ENCODE measurements at regions of chr2 and their contacts with region 1.

Region 1: DNA sequence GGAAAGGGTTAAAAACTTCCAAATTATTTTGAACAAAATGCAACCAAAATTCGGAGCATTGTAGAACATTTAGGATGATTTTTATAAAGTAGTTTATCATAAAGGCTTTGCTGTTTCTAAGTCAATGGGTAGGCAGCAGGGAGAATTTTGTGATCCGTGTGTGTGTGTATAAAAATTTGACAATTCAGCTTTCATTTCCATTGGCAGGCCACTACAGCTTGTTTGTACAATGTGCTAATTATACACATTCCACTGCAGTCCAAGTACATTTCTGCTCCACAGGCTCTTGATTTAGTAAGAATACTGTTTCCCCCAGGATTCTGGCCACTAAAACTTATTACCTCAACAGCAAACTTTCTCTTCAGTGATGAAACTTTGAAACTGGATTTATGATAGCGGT is 71.8 kb upstream of the LTBP1 start:
- DNase-seq: no peak
- H3K4me3 ChIP-seq: peak overlapping the region in 58 of 59 donors; percentile 6 to 67 (median 42)
- H3K27ac ChIP-seq: peak overlapping the region in 33 of 59 donors; percentile 1 to 83 (median 45)
- H3K27me3 ChIP-seq: no peaks in the 10 kb centered on the region
- CTCF ChIP-seq: peak in 5 of 56 donors; percentile 6 to 21 (median 13)

Region 2: GRCh38 chr2:32825291-32825712 is 49.6 kb before region 1 on chr2:
- intact Hi-C with region 1: loop called in 1 of 2 experiments (anchors 5 kb)
- DNase-seq: peak in 4 of 10 donors; percentile 28 to 65 (median 50)
- H3K4me3 ChIP-seq: peak overlapping the region in 49 of 59 donors; percentile 9 to 65 (median 34)
- H3K27ac ChIP-seq: peak overlapping the region in 57 of 59 donors; percentile 3 to 92 (median 79)
- H3K27me3 ChIP-seq: no peaks in the 10 kb centered on the region
- CTCF ChIP-seq: peak in 1 of 56 donors; percentile 15

Region 3: GRCh38 chr2:32926708-32927084 is 51.8 kb after region 1 on chr2:
- intact Hi-C with region 1: loop called in 1 of 2 experiments (anchors 5 kb)
- DNase-seq: peak in 4 of 10 donors; percentile 38 to 60 (median 56)
- H3K4me3 ChIP-seq: peak overlapping the region in 30 of 59 donors; percentile 4 to 61 (median 40)
- H3K27ac ChIP-seq: peak overlapping the region in 49 of 59 donors; percentile 3 to 90 (median 73)
- H3K27me3 ChIP-seq: peaks cover 0 to 8% (median 0%) of the 10 kb centered on the region in 45 donors
- CTCF ChIP-seq: peak in 8 of 56 donors; percentile 13 to 36 (median 20)

Region 4: GRCh38 chr2:33086400-33087015 is 211.6 kb after region 1 on chr2:
- intact Hi-C with region 1: no loop called
- DNase-seq: no peak
- H3K4me3 ChIP-seq: no peak overlapping the region
- H3K27ac ChIP-seq: no peak overlapping the region
- H3K27me3 ChIP-seq: no peaks in the 10 kb centered on the region
- CTCF ChIP-seq: peak in 5 of 56 donors; percentile 12 to 25 (median 16)

Region 5: DNA sequence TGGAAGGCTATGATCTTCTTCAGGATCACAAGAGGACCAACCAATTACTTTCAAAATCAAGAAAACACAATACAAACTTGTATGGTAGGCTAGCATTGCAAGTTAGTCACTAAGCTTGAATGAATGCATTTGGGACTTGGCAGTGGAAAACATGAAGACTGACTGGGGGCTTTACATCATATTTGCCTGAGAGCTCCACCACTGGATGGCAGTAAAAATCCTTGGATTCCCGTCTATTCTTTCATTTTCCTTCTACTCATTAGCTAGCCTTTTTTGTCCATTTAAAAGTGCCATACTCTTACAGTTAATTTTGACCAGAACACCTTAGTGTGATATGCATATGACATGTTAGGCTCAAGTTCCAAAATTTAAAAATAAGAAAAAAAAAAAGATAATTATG is 538.0 kb after region 1 on chr2:
- intact Hi-C with region 1: no loop called
- DNase-seq: no peak
- H3K4me3 ChIP-seq: no peak overlapping the region
- H3K27ac ChIP-seq: peak overlapping the region in 2 of 59 donors; percentile 13 to 43
- H3K27me3 ChIP-seq: no peaks in the 10 kb centered on the region
- CTCF ChIP-seq: peak in 54 of 56 donors; percentile 23 to 75 (median 51)